ENCODE measurements at regions of chrX and their contacts with region 1.

Region 1: DNA sequence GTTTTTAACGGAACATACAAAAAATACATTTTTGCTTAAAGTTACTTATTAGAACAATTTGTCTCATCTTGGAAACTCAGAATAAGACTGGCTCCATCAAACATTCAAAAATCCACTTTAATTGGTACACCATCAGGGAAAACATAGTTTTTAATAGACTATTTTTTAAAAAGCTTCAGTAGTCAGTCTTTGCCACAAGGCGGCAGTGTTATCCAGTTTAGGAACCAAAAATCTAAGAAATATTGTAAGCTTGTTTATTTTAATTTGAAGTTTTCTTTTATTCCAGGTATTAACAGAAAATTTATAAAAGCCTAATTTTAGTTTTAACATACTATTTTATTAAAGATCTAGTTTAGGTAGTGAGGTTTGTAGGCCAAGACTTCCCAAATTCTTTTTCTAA is 107.7 kb downstream of the APOOL start:
- DNase-seq: peak in 2 of 4 donors; percentile 2 to 8
- ATAC-seq: no peak
- H3K4me3 ChIP-seq: no peak overlapping the region
- H3K27ac ChIP-seq: no peak overlapping the region
- H3K4me1 ChIP-seq: no peaks in the 10 kb centered on the region
- H3K27me3 ChIP-seq: no peaks in the 10 kb centered on the region
- CTCF ChIP-seq: peak in 1 of 2 donors; percentile 57

Region 2: DNA sequence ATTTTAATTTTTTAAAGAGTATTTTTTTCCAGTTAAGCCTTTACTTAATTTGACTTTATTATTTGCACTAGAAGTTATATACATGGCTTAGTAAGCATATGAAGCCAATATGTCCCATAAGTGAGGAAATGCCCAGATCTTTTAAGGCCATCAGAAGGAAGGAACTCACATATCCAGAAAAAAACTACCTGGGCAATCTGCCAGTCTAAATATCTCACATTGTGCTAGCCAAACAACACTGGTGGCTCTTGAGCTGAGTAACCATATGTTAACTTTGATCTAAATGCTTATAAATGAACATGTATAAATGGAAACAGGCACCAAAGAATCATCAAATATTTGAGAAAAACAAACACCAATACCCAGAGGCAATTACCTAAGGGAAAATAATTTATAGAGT is 246.2 kb before region 1 on chrX:
- intact Hi-C with region 1: no loop called
- DNase-seq: peak in 1 of 4 donors; percentile 2
- ATAC-seq: no peak
- H3K4me3 ChIP-seq: no peak overlapping the region
- H3K27ac ChIP-seq: no peak overlapping the region
- H3K4me1 ChIP-seq: no peaks in the 10 kb centered on the region
- H3K27me3 ChIP-seq: no peaks in the 10 kb centered on the region
- CTCF ChIP-seq: no peak

Region 3: DNA sequence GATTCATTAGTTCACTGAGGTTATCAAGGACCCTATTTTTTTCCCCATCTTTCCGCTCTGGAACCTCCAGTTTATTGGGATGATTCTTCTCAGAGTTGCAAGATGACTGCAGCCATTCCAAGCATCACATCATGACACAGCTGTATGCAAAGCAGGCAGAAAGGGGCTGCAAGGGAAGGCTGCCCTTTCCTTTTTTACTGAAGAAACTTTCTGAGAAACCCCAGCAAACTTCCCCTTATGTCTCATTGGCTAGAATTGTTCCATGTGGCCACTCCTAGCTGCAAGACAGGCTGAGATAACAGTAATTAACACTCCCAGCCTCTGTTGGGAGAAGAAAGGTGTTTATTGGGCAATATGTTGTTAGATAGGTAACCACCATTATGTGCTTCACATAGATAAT is 29.6 kb after region 1 on chrX:
- intact Hi-C with region 1: no loop called
- DNase-seq: no peak
- ATAC-seq: no peak
- H3K4me3 ChIP-seq: no peak overlapping the region
- H3K27ac ChIP-seq: no peak overlapping the region
- H3K4me1 ChIP-seq: no peaks in the 10 kb centered on the region
- H3K27me3 ChIP-seq: no peaks in the 10 kb centered on the region
- CTCF ChIP-seq: no peak

Region 4: GRCh38 chrX:85544609-85545008 is 433.3 kb after region 1 on chrX:
- intact Hi-C with region 1: loop called in 1 of 2 experiments (anchors 10 kb)
- DNase-seq: peak in 1 of 4 donors; percentile 0
- ATAC-seq: no peak
- H3K4me3 ChIP-seq: no peak overlapping the region
- H3K27ac ChIP-seq: no peak overlapping the region
- H3K4me1 ChIP-seq: no peaks in the 10 kb centered on the region
- H3K27me3 ChIP-seq: no peaks in the 10 kb centered on the region
- CTCF ChIP-seq: peak in 1 of 2 donors; percentile 38

Measured in left lung (tissue), 14 donors.